ENCODE measurements at regions of chr2 and their contacts with region 1.

Region 1: GRCh38 chr2:174682578-174683391 is 81.5 kb downstream of the CHRNA1 start:
- DNase-seq: peak in 7 of 10 donors; percentile 51 to 79 (median 60)
- H3K4me3 ChIP-seq: peak overlapping the region; percentile 68 to 96 (median 87)
- H3K27ac ChIP-seq: peak overlapping the region in 56 of 59 donors; percentile 41 to 94 (median 83)
- H3K27me3 ChIP-seq: no peaks in the 10 kb centered on the region
- CTCF ChIP-seq: peak in 3 of 56 donors; percentile 14 to 37 (median 26)

Region 2: DNA sequence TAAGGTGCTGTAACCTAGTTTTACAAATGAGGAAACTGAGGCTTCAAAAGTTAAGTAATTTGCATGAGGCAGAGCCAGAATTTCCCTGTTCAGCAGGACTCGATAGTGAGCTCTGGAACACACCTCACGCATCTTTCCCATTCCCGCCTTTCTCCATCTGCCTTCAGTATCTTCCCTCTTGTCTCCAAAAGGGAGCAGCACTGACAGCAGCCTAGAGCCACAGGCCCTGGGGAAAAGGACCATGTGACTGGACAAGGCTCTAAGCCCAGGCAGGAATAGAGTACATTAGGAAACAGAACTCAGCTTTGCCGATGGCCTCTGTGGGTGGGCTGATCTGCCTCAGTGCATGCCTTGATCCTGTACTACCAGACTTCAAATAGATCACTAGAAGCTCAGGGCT is 217.5 kb before region 1 on chr2:
- intact Hi-C with region 1: loop called in 1 of 2 experiments (anchors 10 kb)
- DNase-seq: no peak
- H3K4me3 ChIP-seq: no peak overlapping the region
- H3K27ac ChIP-seq: no peak overlapping the region
- H3K27me3 ChIP-seq: no peaks in the 10 kb centered on the region
- CTCF ChIP-seq: peak in 4 of 56 donors; percentile 10 to 28 (median 16)

Region 3: GRCh38 chr2:174577967-174578589 is 104.7 kb before region 1 on chr2:
- intact Hi-C with region 1: loop called in 1 of 2 experiments (anchors 5 kb)
- DNase-seq: peak in 2 of 10 donors; percentile 45 to 68
- H3K4me3 ChIP-seq: no peak overlapping the region
- H3K27ac ChIP-seq: peak overlapping the region in 14 of 59 donors; percentile 3 to 94 (median 73)
- H3K27me3 ChIP-seq: no peaks in the 10 kb centered on the region
- CTCF ChIP-seq: peak in 55 of 56 donors; percentile 36 to 81 (median 58)

Region 4: DNA sequence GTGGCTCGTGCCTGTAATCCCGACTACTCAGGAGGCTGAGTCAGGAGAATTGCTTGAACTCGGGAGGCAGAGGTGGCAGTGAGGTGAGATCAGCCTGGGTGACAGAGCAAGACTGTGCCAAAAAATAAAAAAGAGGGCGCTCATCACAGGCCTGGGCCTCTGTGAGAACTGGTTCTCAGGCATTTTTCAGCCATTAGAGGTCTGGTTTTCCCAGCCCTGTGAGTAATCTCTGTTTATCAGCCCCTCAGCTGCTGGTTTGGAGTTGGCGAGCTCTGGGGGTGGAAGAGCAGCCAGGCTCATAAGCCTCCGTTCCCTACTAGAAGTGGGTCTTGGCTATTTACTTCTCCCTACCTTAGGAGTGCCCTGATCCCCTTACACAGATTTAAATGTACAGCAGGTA is 28.4 kb after region 1 on chr2:
- intact Hi-C with region 1: no loop called
- DNase-seq: no peak
- H3K4me3 ChIP-seq: no peak overlapping the region
- H3K27ac ChIP-seq: no peak overlapping the region
- H3K27me3 ChIP-seq: peaks cover 0 to 5% (median 0%) of the 10 kb centered on the region in 45 donors
- CTCF ChIP-seq: no peak